ENCODE measurements at regions of chr10 and their contacts with region 1.

Region 1: DNA sequence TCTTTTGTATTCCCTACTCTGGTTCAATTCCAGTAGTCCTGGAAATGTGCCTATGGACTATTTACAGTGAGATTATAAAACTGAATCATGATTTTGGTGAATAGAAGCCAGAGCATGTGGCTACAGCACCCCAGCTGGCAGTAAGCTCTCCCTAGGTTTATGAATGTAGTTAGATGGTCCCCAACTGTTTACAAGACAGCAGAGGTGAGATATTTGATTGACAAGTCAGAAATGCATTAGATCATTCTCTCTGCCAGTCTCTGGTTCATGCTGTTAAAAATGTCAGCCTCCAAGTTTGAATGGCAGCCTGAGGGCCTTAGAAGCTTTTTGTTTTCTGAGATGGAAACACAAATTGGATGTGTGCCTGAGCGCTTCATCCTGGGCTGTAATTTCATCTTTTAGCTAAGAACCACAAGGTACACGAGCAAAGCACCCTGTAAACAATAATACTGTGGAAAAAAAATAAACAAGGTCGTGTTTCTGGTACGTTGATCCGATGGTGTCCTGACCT is 85.0 kb downstream of the BTRC start:
- DNase-seq: no peak
- ATAC-seq: no peak
- H3K4me3 ChIP-seq: no peak overlapping the region
- H3K27ac ChIP-seq: no peak overlapping the region
- H3K4me1 ChIP-seq: no peaks in the 10 kb centered on the region
- H3K27me3 ChIP-seq: no peaks in the 10 kb centered on the region
- CTCF ChIP-seq: no peak
- POLR2A ChIP-seq: no peak

Region 2: GRCh38 chr10:101120884-101121653 is 317.9 kb before region 1 on chr10:
- intact Hi-C with region 1: no loop called
- DNase-seq: peak; percentile 69 to 82 (median 80)
- ATAC-seq: peak; percentile 91 to 96 (median 94)
- H3K4me3 ChIP-seq: peak overlapping the region; percentile 56 to 72 (median 66)
- H3K27ac ChIP-seq: peak overlapping the region in 2 of 3 donors; percentile 52 to 60
- H3K4me1 ChIP-seq: peaks cover 0 to 10% (median 0%) of the 10 kb centered on the region in 4 donors
- H3K27me3 ChIP-seq: no peaks in the 10 kb centered on the region
- CTCF ChIP-seq: no peak
- POLR2A ChIP-seq: peak; percentile 19

Region 3: GRCh38 chr10:101297901-101298486 is 140.9 kb before region 1 on chr10:
- intact Hi-C with region 1: loop called in 1 of 2 experiments (anchors 10 kb)
- DNase-seq: peak; percentile 46 to 65 (median 53)
- ATAC-seq: peak; percentile 57 to 68 (median 62)
- H3K4me3 ChIP-seq: no peak overlapping the region
- H3K27ac ChIP-seq: no peak overlapping the region
- H3K4me1 ChIP-seq: no peaks in the 10 kb centered on the region
- H3K27me3 ChIP-seq: no peaks in the 10 kb centered on the region
- CTCF ChIP-seq: peak; percentile 51 to 84 (median 81)
- POLR2A ChIP-seq: no peak

Region 4: GRCh38 chr10:101558202-101558601 is 119.3 kb after region 1 on chr10:
- intact Hi-C with region 1: no loop called
- DNase-seq: no peak
- ATAC-seq: no peak
- H3K4me3 ChIP-seq: no peak overlapping the region
- H3K27ac ChIP-seq: no peak overlapping the region
- H3K4me1 ChIP-seq: no peaks in the 10 kb centered on the region
- H3K27me3 ChIP-seq: no peaks in the 10 kb centered on the region
- CTCF ChIP-seq: no peak
- POLR2A ChIP-seq: no peak

Measured in right lobe of liver (tissue), 6 donors.